ENCODE measurements at regions of chr11 and their contacts with region 1.

Region 1: GRCh38 chr11:110479108-110480101 is 49.7 kb downstream of the FDX1 start:
- DNase-seq: peak in 1 of 35 experiments; percentile 20
- ATAC-seq: no peak
- H3K4me3 ChIP-seq: no peak overlapping the region
- H3K4me3 Mint-ChIP-seq: no peak overlapping the region
- H3K27ac ChIP-seq: no peak overlapping the region
- H3K27ac Mint-ChIP-seq: no peak overlapping the region
- H3K4me1 ChIP-seq: no peaks in the 10 kb centered on the region
- H3K4me1 Mint-ChIP-seq: peaks cover 0 to 5% (median 5%) of the 10 kb centered on the region in 3 donors
- H3K27me3 ChIP-seq: no peaks in the 10 kb centered on the region
- H3K27me3 Mint-ChIP-seq: no peaks in the 10 kb centered on the region

Region 2: GRCh38 chr11:110279881-110280280 is 199.5 kb before region 1 on chr11:
- CTCF ChIA-PET with region 1: no interaction called
- POLR2A ChIA-PET with region 1: interaction called in 1 of 2 experiments, 13 read pairs
- DNase-seq: no peak
- ATAC-seq: no peak
- H3K4me3 ChIP-seq: no peak overlapping the region
- H3K4me3 Mint-ChIP-seq: no peak overlapping the region
- H3K27ac ChIP-seq: no peak overlapping the region
- H3K27ac Mint-ChIP-seq: no peak overlapping the region
- H3K4me1 ChIP-seq: no peaks in the 10 kb centered on the region
- H3K4me1 Mint-ChIP-seq: peaks cover 0 to 9% (median 7%) of the 10 kb centered on the region in 3 donors
- H3K27me3 ChIP-seq: no peaks in the 10 kb centered on the region
- H3K27me3 Mint-ChIP-seq: no peaks in the 10 kb centered on the region

Region 3: GRCh38 chr11:110530900-110531741 is 51.7 kb after region 1 on chr11:
- CTCF ChIA-PET with region 1: no interaction called
- POLR2A ChIA-PET with region 1: interaction called in 1 of 2 experiments, 16 read pairs
- DNase-seq: no peak
- ATAC-seq: no peak
- H3K4me3 ChIP-seq: no peak overlapping the region
- H3K4me3 Mint-ChIP-seq: no peak overlapping the region
- H3K27ac ChIP-seq: no peak overlapping the region
- H3K27ac Mint-ChIP-seq: no peak overlapping the region
- H3K4me1 ChIP-seq: peaks cover 0 to 5% of the 10 kb centered on the region in 2 experiments
- H3K4me1 Mint-ChIP-seq: peaks cover 0 to 11% (median 3%) of the 10 kb centered on the region in 3 donors
- H3K27me3 ChIP-seq: no peaks in the 10 kb centered on the region
- H3K27me3 Mint-ChIP-seq: no peaks in the 10 kb centered on the region

Measured in T-cell (primary cell).